Kidney (tissue), 22 donors: ENCODE measurements at regions of chr5 and their contacts with region 1.

Region 1: GRCh38 chr5:140647042-140647341 is 438 bp downstream of the NDUFA2 start:
- DNase-seq: no peak
- H3K4me3 ChIP-seq: peak overlapping the region; percentile 92 to 100 (median 99)
- H3K27ac ChIP-seq: peak overlapping the region; percentile 63 to 80
- H3K4me1 ChIP-seq: peaks cover 3 to 14% (median 5%) of the 10 kb centered on the region in 3 donors
- H3K27me3 ChIP-seq: no peaks in the 10 kb centered on the region
- CTCF ChIP-seq: no peak

Region 2: DNA sequence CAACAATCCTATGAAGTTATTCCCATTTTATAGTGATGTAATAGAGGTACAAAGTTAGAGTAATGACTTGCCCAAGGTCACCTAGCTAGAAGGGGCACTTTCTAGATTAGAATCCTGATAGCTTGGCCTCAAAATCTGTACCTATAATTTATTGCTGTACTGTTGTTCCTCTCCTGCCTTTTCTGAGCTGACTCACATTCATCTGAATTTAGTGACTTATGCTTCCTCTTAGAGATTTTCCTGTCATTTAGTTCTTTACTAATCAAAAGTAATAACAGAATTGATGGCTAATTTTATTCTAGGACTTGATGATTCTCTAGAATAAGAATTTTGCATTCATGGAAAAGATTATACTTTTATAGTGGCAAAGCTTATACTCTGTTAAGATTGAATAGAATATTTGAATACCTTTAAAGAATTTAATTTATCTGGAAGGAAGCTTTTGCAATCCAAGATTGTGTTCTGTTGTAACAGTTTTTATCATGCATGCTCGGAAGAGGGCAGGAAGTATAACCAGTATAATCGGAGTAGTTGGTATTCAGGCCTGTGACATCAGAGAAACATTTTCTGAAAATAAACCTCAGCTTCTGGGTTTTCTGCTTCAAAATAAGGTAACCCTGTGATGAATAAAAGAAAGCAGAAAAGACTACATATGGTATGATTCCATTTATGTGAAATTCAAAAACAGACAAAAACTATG is 450.7 kb before region 1 on chr5:
- intact Hi-C with region 1: no loop called
- DNase-seq: no peak
- H3K4me3 ChIP-seq: no peak overlapping the region
- H3K27ac ChIP-seq: peak overlapping the region; percentile 30 to 52
- H3K4me1 ChIP-seq: peaks cover 0 to 41% (median 9%) of the 10 kb centered on the region in 3 donors
- H3K27me3 ChIP-seq: no peaks in the 10 kb centered on the region
- CTCF ChIP-seq: no peak

Region 3: DNA sequence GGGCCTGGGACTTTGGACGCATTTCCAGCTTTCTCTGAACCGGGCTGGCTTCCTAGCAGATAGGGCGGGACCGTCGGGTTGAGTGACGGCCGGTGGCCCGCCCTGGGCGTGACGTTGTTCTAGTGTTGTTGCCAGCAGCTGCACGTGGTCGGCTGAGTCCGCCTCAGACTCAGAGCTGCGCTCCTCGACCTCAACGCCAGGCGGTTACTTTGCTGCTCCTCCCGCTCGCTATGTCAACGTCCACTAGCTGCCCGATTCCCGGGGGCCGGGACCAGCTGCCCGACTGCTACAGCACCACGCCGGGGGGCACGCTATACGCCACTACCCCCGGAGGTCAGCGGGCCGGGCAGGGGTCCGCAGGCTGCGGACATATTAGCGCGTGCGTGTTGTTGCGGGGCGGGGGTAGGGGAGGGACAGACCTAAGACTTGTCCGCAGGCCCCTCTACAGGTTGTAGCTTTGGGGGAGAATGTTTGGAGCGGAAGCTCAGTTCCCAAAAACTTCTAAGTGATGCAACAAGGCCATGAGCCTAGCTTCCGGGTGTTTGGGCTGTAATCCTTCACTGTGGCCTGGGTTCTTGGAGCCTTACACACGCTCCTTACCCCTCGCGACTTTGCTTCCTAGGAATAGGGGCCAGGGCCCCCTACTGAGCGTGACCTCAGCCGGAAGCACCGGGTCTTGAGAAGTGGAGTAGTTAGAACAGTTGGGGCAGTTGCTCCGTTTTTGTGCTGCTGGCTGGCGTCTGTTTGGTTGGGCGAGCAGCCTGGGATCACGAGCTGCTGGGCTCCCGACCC is 99.3 kb before region 1 on chr5 and contains the start of gene EIF4EBP3:
- intact Hi-C with region 1: loop called (anchors 10 kb)
- DNase-seq: peak; percentile 96 to 99 (median 97)
- H3K4me3 ChIP-seq: peak within 1 kb of the TSS; percentile 45 to 68 (median 61)
- H3K27ac ChIP-seq: peak within 1 kb of the TSS; percentile 96 to 98
- H3K4me1 ChIP-seq: peaks cover 0 to 35% (median 32%) of the 10 kb centered on the region in 3 donors
- H3K27me3 ChIP-seq: no peaks in the 10 kb centered on the region
- CTCF ChIP-seq: peak; percentile 48
- total RNA-seq, gene EIF4EBP3: 22.6 TPM

Region 4: DNA sequence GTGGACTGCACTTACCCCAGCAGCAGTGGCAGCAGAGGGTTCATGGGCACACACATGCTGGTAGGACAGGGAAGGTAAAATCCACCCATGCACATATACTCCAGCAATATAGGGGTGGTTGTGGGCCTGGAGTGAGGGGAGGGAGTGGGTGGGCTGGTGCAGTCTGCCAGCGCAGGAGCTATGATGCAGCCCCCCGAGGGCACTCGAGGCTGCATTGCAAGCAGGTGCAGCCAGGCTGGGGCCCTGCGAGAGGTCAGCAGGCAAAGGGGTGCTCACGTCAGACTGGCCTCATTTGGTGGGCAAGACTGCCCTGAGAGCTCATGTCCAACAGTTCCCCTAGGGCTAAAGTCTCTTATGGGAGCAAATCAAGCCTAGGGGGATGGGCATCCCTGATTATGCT is 106.6 kb after region 1 on chr5:
- intact Hi-C with region 1: no loop called
- DNase-seq: no peak
- H3K4me3 ChIP-seq: no peak overlapping the region
- H3K27ac ChIP-seq: no peak overlapping the region
- H3K4me1 ChIP-seq: no peaks in the 10 kb centered on the region
- H3K27me3 ChIP-seq: no peaks in the 10 kb centered on the region
- CTCF ChIP-seq: no peak